ENCODE measurements at regions of chr2 and their contacts with region 1.

Region 1: DNA sequence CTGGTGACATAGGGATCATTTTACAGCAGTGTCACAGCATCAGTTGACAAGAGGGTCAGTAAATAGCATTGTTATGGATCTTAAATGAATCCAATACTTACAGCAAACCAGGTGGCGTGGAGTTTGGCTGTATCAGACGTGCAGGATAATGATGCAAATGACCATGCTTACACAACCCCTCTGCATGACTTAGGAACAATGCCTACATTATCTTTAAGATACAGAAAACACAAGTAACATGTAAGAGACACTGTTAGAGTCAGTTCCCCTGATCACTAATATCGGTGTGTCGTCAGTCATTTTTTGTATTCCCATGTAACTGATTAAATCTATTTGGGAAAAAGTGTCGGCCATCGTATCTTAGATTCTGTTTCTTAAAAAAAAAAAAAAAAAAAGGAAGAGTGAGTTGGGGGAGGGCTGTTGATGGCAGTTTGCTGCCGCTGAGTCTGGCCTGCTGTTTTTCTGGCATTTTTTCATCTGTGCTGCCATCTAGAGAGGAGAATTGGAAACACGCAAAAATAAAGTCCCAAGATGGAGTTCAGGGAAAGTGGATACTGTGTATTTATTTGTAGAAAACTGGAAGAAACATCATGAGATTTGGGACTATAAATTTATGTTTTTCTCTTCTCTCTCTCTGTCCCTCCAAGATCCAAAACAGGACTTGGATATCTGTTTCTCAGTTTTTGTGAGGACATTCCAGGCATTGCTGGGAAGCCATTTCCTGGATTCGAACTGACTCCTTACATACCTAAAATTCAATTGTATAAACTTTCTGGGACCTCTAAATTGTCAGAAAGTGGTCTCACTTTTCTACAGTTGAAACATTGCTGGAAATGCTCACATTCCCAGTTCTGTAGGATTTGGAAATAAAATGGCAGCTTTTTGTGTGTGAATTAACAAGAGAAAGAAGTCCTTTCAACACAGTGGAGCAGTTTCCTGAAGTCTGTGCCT is 60.3 kb upstream of the AGPS start:
- DNase-seq: peak; percentile 38 to 41
- ATAC-seq: peak; percentile 79

Region 2: DNA sequence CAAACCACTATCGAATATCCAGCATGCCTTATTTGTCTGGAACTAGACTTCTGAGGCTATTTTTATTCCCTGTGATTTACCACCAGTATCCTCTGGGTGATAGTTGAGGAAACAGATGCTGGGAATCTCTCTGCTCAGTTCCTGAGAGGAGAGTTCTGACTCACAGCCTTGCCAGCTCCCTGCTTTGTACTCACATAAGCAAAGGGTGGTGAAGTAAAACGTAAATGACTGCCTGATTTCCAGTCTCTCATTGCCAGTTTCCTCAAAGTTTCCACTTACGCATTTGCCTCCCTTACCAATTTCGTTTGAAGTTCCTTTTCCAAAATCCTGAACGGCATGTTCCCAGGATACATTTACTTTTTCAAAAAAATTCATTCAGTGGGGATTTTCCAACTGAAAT is 188.9 kb before region 1 on chr2:
- intact Hi-C with region 1: no loop called
- DNase-seq: no peak
- ATAC-seq: no peak

Region 3: DNA sequence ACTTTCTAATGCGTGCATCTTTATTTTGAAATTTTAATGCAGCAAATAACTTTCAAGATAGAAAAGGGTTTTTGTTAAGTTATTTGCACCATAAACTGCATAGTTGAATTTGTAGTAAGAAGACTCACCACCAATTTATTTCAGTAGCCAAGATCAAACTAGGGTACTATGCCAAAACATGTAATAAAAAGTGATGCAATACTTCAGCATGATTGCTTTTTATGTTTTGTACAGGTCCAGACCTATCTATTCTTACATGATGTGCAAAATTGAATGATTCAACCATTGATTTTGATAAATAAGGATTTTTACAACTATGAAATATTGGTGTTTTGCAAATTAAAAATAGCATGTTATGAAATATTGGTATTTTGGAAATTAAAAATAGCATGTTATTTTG is 87.0 kb after region 1 on chr2:
- intact Hi-C with region 1: loop called in 1 of 2 experiments (anchors 2 kb)
- DNase-seq: no peak
- ATAC-seq: peak; percentile 42

Region 4: GRCh38 chr2:177604271-177605065 is 272.2 kb after region 1 on chr2:
- intact Hi-C with region 1: loop called in 1 of 2 experiments (anchors 10 kb)
- DNase-seq: no peak
- ATAC-seq: peak; percentile 42

Region 5: DNA sequence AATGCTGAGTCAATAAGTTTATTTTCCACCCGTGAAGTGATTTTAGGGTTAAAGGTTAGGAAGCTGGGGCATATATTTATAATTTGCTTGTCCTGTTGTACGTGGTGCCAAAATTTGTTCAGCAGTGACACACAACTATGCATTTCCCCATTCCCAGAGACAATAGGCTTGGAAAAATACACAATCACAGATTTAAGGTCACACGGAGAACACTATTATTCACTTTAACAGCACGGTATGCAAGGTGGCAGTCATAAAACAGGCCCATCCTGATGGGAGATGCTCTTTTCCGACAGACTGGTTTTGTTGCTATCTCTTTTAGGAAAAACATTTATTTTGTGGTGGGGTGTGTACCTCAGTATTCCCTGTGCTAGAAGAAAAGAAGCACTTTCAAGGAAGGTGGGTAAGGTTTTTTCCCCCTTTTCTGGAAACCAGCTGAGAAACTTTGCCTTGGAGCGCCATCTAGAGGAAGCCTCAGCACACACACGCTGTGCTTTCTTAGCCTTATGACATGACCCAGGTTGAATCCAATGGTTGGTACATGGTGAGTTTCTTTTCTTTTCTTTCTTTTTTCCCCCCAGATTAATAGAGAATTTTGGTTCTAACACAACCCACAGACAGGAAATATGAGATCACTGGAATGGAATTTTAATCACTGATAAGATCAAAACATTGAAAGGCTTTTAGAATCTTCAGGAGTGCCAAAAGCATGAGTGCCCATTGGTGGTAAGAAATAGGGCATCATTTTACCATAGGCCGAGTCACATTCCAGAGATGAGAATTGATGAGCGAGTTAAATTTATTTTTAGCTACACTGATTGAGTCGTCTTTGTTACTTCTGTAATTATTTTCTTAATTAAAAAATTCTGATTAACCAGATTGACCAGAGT is 392.3 kb after region 1 on chr2:
- intact Hi-C with region 1: loop called in 1 of 2 experiments (anchors 10 kb)
- DNase-seq: peak in 1 of 2 donors; percentile 51
- ATAC-seq: peak; percentile 81

Region 6: GRCh38 chr2:178414266-178415247 is 1082.2 kb after region 1 on chr2:
- intact Hi-C with region 1: no loop called
- DNase-seq: peak; percentile 87 to 91
- ATAC-seq: peak; percentile 96

Measured in left colon (tissue), 2 donors.